Activated CD4-positive, alpha-beta memory T cell treated with anti-CD3 and anti-CD28 coated beads, Interleukin-2, amount 10 ng/mL, durations not matched to agents 7 days and 5 days (primary cell): ENCODE measurements at regions of chr2 and their contacts with region 1.

Region 1: DNA sequence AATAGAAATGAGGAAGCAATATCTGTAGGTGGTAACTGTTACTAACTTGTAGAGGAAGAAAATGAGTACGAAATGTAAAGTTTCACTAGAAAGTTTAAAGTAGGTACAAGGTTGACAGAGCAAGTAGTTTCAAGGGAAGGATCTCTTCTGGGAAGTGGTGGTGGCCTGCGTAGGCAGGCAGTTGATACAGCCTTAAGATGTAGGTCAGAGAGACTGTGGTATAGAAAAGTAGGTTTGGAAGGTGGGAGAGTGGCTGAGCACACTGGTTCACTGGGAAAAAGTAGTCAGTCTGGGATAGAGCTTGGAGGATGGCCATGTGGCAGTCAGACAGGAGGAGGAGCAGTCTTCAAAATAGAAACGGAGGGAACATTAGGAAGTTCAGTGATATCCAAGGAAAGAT is 23.5 kb downstream of the KDM3A start:
- DNase-seq: no peak
- H3K4me3 Mint-ChIP-seq: no peak overlapping the region
- H3K27ac Mint-ChIP-seq: peak overlapping the region; percentile 47
- H3K4me1 Mint-ChIP-seq: peaks cover 50% of the 10 kb centered on the region
- H3K27me3 Mint-ChIP-seq: no peaks in the 10 kb centered on the region

Region 2: DNA sequence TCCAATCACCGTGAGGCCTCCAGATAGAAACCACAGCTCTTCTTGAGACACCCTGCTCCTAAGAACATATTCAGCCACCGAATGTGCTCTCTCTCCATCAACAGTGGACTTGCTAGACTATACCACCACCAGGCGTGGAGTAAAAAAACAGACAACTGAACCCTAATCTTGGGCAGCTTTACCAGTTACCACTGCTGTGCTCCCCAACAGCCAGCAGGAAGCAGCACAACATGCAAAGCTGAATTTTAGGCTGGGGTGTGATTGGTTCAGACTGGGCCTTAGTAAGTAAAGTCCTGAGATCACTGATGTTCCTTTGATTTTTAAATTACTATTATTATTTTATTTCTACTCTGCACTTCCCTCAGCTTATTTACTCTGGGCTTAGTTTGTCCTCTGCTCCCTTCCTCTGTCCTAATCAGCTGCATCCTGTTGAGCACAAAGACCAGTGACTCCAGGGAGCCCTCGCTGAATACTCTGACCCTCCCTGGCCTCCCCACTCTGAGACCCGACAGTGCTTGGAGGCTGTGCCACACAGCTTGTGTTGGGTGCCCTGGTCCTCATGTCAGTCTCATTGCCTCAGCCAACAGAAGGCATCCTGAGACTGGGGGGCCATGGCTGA is 243.5 kb before region 1 on chr2:
- CTCF ChIA-PET with region 1: interaction called, 13 read pairs
- POLR2A ChIA-PET with region 1: interaction called, 4 read pairs
- DNase-seq: peak; percentile 72
- H3K4me3 Mint-ChIP-seq: no peak overlapping the region
- H3K27ac Mint-ChIP-seq: no peak overlapping the region
- H3K4me1 Mint-ChIP-seq: peaks cover 46% of the 10 kb centered on the region
- H3K27me3 Mint-ChIP-seq: no peaks in the 10 kb centered on the region

Region 3: GRCh38 chr2:86453836-86454235 is 10.8 kb before region 1 on chr2:
- CTCF ChIA-PET with region 1: interaction called, 5 read pairs
- POLR2A ChIA-PET with region 1: interaction called, 12 read pairs
- DNase-seq: no peak
- H3K4me3 Mint-ChIP-seq: no peak overlapping the region
- H3K27ac Mint-ChIP-seq: no peak overlapping the region
- H3K4me1 Mint-ChIP-seq: peaks cover 9% of the 10 kb centered on the region
- H3K27me3 Mint-ChIP-seq: no peaks in the 10 kb centered on the region

Region 4: GRCh38 chr2:86623651-86624541 is 159.2 kb after region 1 on chr2 and contains the start of gene RNF103:
- CTCF ChIA-PET with region 1: interaction called, 3 read pairs
- POLR2A ChIA-PET with region 1: interaction called, 20 read pairs
- DNase-seq: peak; percentile 91
- H3K4me3 Mint-ChIP-seq: peak within 1 kb of the TSS; percentile 90
- H3K27ac Mint-ChIP-seq: peak within 1 kb of the TSS; percentile 95
- H3K4me1 Mint-ChIP-seq: peaks cover 19% of the 10 kb centered on the region
- H3K27me3 Mint-ChIP-seq: peaks cover 23% of the 10 kb centered on the region
- total RNA-seq, gene RNF103: 18.9 to 19.9 TPM